ENCODE measurements at regions of chr10 and their contacts with region 1.

Region 1: GRCh38 chr10:100969187-100970075 is at the start of gene SEMA4G:
- DNase-seq: peak; percentile 14 to 73 (median 36)
- ATAC-seq: peak; percentile 77
- H3K4me3 ChIP-seq: peak within 1 kb of the TSS; percentile 46
- H3K4me3 Mint-ChIP-seq: peak within 1 kb of the TSS; percentile 76
- H3K27ac ChIP-seq: no peak within 1 kb of the TSS
- H3K27ac Mint-ChIP-seq: no peak within 1 kb of the TSS
- H3K4me1 ChIP-seq: peaks cover 20% of the 10 kb centered on the region
- H3K4me1 Mint-ChIP-seq: peaks cover 21% of the 10 kb centered on the region
- H3K27me3 ChIP-seq: no peaks in the 10 kb centered on the region
- H3K27me3 Mint-ChIP-seq: no peaks in the 10 kb centered on the region
- CTCF ChIP-seq: peak; percentile 67
- total RNA-seq, gene SEMA4G: 1.1 to 1.6 TPM

Region 2: GRCh38 chr10:100864978-100865377 is 104.5 kb before region 1 on chr10:
- CTCF ChIA-PET with region 1: no interaction called
- POLR2A ChIA-PET with region 1: no interaction called
- intact Hi-C with region 1: no loop called
- DNase-seq: no peak
- ATAC-seq: no peak
- H3K4me3 ChIP-seq: no peak overlapping the region
- H3K4me3 Mint-ChIP-seq: no peak overlapping the region
- H3K27ac ChIP-seq: no peak overlapping the region
- H3K27ac Mint-ChIP-seq: no peak overlapping the region
- H3K4me1 ChIP-seq: no peaks in the 10 kb centered on the region
- H3K4me1 Mint-ChIP-seq: no peaks in the 10 kb centered on the region
- H3K27me3 ChIP-seq: peaks cover 11 to 19% of the 10 kb centered on the region in 2 experiments
- H3K27me3 Mint-ChIP-seq: peaks cover 59% of the 10 kb centered on the region
- CTCF ChIP-seq: no peak

Region 3: GRCh38 chr10:100986952-100987750 is 17.7 kb after region 1 on chr10 and contains the starts of genes MRPL43 and TWNK:
- CTCF ChIA-PET with region 1: no interaction called
- POLR2A ChIA-PET with region 1: interaction called, 3 read pairs
- intact Hi-C with region 1: loop called in 1 of 2 experiments (anchors 2 kb)
- DNase-seq: peak; percentile 74 to 92 (median 81)
- ATAC-seq: peak; percentile 96
- H3K4me3 ChIP-seq: peak within 1 kb of the TSS; percentile 96
- H3K4me3 Mint-ChIP-seq: peak within 1 kb of the TSS; percentile 97
- H3K27ac ChIP-seq: peak within 1 kb of the TSS; percentile 52 to 67
- H3K27ac Mint-ChIP-seq: peak within 1 kb of the TSS; percentile 86
- H3K4me1 ChIP-seq: peaks cover 41% of the 10 kb centered on the region
- H3K4me1 Mint-ChIP-seq: peaks cover 26% of the 10 kb centered on the region
- H3K27me3 ChIP-seq: no peaks in the 10 kb centered on the region
- H3K27me3 Mint-ChIP-seq: no peaks in the 10 kb centered on the region
- CTCF ChIP-seq: no peak
- total RNA-seq, gene MRPL43: 28.5 to 31.0 TPM
- total RNA-seq, gene TWNK: 2.7 to 2.8 TPM

Region 4: GRCh38 chr10:100998991-100999741 is 29.7 kb after region 1 on chr10:
- CTCF ChIA-PET with region 1: no interaction called
- POLR2A ChIA-PET with region 1: interaction called, 10 read pairs
- intact Hi-C with region 1: no loop called
- DNase-seq: peak; percentile 61 to 90 (median 74)
- ATAC-seq: peak; percentile 66
- H3K4me3 ChIP-seq: peak overlapping the region; percentile 97
- H3K4me3 Mint-ChIP-seq: peak overlapping the region; percentile 90
- H3K27ac ChIP-seq: peak overlapping the region; percentile 82 to 90
- H3K27ac Mint-ChIP-seq: peak overlapping the region; percentile 76
- H3K4me1 ChIP-seq: peaks cover 41% of the 10 kb centered on the region
- H3K4me1 Mint-ChIP-seq: peaks cover 25% of the 10 kb centered on the region
- H3K27me3 ChIP-seq: no peaks in the 10 kb centered on the region
- H3K27me3 Mint-ChIP-seq: no peaks in the 10 kb centered on the region
- CTCF ChIP-seq: peak; percentile 96

Region 5: GRCh38 chr10:101141616-101142532 is 172.4 kb after region 1 on chr10:
- CTCF ChIA-PET with region 1: no interaction called
- POLR2A ChIA-PET with region 1: no interaction called
- intact Hi-C with region 1: no loop called
- DNase-seq: peak; percentile 60 to 89 (median 77)
- ATAC-seq: peak; percentile 87
- H3K4me3 ChIP-seq: no peak overlapping the region
- H3K4me3 Mint-ChIP-seq: no peak overlapping the region
- H3K27ac ChIP-seq: no peak overlapping the region
- H3K27ac Mint-ChIP-seq: no peak overlapping the region
- H3K4me1 ChIP-seq: peaks cover 43% of the 10 kb centered on the region
- H3K4me1 Mint-ChIP-seq: peaks cover 22% of the 10 kb centered on the region
- H3K27me3 ChIP-seq: peaks cover 89 to 99% of the 10 kb centered on the region in 2 experiments
- H3K27me3 Mint-ChIP-seq: peaks cover 93% of the 10 kb centered on the region
- CTCF ChIP-seq: peak; percentile 98

Measured in CD4-positive, alpha-beta T cell (primary cell).